ENCODE measurements at regions of chr19 and their contacts with region 1.

Region 1: GRCh38 chr19:44212250-44212865 is at the start of gene ZNF227:
- DNase-seq: peak; percentile 85
- ATAC-seq: peak; percentile 94
- H3K4me3 ChIP-seq: peak within 1 kb of the TSS; percentile 85 to 93 (median 88)
- H3K4me3 Mint-ChIP-seq: peak within 1 kb of the TSS; percentile 96
- H3K27ac ChIP-seq: peak within 1 kb of the TSS; percentile 48 to 77
- H3K27ac Mint-ChIP-seq: peak within 1 kb of the TSS; percentile 93
- H3K4me1 ChIP-seq: peaks cover 14 to 15% of the 10 kb centered on the region in 2 donors
- H3K4me1 Mint-ChIP-seq: peaks cover 21% of the 10 kb centered on the region
- H3K27me3 ChIP-seq: no peaks in the 10 kb centered on the region
- H3K27me3 Mint-ChIP-seq: no peaks in the 10 kb centered on the region
- CTCF ChIP-seq: no peak
- total RNA-seq, gene ZNF227: 49.5 and 53.0 TPM in 2 replicates

Region 2: DNA sequence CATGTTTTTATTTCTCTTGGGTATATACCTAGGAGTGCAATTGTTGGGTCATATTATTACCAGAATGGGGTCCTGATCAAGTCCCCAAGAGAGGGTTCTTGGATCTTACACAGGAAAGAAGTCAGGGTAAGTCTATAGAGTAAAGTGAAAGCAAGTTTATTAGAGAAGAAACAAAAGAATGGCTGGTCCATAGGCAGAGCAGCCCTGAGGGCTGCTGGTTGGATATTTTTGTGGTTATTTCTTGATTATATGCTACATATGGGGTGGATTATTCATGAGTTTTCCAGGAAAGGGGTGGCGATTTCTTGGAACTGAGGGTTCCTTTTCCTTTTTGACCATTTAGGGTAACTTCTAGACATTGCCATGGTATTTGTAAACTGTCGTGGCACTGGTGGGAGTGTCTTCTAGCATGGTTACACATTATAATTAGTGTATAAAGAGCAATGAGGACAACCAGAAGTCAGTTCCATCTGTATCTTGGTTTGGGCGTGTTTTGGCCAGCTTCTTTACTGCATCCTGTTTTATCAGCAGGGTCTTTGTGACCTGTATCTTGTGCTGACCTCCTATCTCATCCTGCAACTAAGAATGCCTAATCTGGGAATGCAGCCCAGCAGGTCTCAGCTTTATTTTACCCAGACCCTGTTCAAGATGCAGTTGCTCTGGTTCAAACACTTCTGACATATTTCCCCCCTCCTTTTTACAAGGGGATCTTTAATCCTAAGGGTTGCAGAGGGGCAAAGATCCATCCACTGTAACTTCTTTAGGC is 1725.1 kb before region 1 on chr19:
- CTCF ChIA-PET with region 1: no interaction called
- POLR2A ChIA-PET with region 1: interaction called, 12 read pairs
- intact Hi-C with region 1: no loop called
- DNase-seq: no peak
- ATAC-seq: no peak
- H3K4me3 ChIP-seq: no peak overlapping the region
- H3K4me3 Mint-ChIP-seq: no peak overlapping the region
- H3K27ac ChIP-seq: no peak overlapping the region
- H3K27ac Mint-ChIP-seq: no peak overlapping the region
- H3K4me1 ChIP-seq: no peaks in the 10 kb centered on the region
- H3K4me1 Mint-ChIP-seq: no peaks in the 10 kb centered on the region
- H3K27me3 ChIP-seq: no peaks in the 10 kb centered on the region
- H3K27me3 Mint-ChIP-seq: no peaks in the 10 kb centered on the region
- CTCF ChIP-seq: no peak

Region 3: DNA sequence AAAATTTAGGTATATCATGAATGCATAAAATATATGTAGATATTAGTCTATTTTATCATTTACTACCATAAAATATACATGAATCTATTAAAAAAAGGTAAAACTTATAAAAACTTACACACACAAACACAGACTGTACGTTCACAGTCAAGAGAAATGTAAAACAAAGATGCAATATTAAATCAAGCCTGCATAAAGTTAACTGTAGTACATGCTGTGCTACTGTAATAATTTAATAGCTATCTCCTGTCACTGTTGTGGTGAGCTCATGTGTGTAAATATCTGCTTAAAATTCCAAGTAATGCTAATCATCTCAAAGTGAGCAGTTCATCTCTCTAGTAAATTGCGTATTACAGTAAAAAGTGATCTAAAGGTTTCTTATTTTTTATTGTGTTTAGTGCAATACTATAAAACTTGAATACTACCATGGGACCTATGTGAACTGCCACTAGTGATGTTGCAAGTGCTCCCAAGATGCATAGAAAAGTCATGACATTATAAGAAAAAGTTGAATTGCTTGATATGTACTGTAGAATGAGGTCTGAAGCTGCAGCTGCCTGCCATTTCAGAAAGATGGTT is 46.6 kb after region 1 on chr19:
- CTCF ChIA-PET with region 1: interaction called, 4 read pairs
- POLR2A ChIA-PET with region 1: no interaction called
- intact Hi-C with region 1: loop called (anchors 1 kb)
- DNase-seq: no peak
- ATAC-seq: no peak
- H3K4me3 ChIP-seq: no peak overlapping the region
- H3K4me3 Mint-ChIP-seq: peak overlapping the region; percentile 55
- H3K27ac ChIP-seq: no peak overlapping the region
- H3K27ac Mint-ChIP-seq: no peak overlapping the region
- H3K4me1 ChIP-seq: peaks cover 5 to 13% of the 10 kb centered on the region in 2 donors
- H3K4me1 Mint-ChIP-seq: peaks cover 12% of the 10 kb centered on the region
- H3K27me3 ChIP-seq: no peaks in the 10 kb centered on the region
- H3K27me3 Mint-ChIP-seq: no peaks in the 10 kb centered on the region
- CTCF ChIP-seq: no peak

Region 4: DNA sequence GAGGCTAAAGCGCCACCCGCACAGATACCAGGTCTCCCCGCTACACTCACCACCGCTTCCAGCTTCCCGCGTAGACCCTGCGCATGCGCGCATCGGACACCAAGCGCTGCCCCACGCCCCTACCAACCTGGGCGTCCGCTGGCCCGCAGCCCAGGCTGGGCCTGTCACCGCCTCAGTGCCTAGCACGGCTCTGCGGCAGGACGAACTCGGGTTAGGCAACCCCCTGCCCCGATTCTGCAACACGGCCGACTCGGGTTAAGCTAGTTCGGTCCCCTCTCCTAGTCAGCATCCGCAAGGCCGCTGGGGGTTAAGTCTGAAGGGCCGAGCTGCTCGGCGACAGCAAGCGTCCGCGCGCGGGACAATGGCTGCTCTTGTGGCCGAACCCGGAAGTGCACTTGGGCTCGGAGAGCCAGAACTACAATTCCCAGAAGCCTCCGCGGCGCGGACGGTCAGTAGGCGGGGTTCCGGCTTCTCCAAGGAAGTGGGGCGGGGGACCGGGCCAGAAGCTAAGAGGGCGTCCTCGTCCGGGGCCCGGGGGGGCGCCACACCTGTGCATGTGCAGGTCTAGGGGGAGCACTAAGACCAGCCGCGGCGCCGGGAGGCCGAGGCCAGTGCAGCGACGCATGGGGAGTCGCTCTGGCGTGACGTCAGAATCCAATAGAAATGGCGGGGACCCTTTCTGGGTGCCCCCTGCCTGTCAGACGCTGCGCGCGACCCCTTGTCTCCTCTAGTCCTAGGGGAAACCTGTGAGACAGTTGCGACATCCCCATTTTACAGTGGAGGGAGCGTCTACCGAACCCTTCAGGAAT is 288.0 kb after region 1 on chr19 and contains the start of gene ZNF180:
- CTCF ChIA-PET with region 1: no interaction called
- POLR2A ChIA-PET with region 1: no interaction called
- intact Hi-C with region 1: loop called (anchors 1 kb)
- DNase-seq: peak; percentile 98
- ATAC-seq: peak; percentile 93
- H3K4me3 ChIP-seq: peak within 1 kb of the TSS; percentile 70 to 99 (median 93)
- H3K4me3 Mint-ChIP-seq: peak within 1 kb of the TSS; percentile 99
- H3K27ac ChIP-seq: peak within 1 kb of the TSS; percentile 52 to 84
- H3K27ac Mint-ChIP-seq: peak within 1 kb of the TSS; percentile 92
- H3K4me1 ChIP-seq: peaks cover 13 to 25% of the 10 kb centered on the region in 2 donors
- H3K4me1 Mint-ChIP-seq: peaks cover 29% of the 10 kb centered on the region
- H3K27me3 ChIP-seq: peaks cover 0 to 5% (median 2%) of the 10 kb centered on the region in 4 experiments
- H3K27me3 Mint-ChIP-seq: peaks cover 14% of the 10 kb centered on the region
- CTCF ChIP-seq: peak; percentile 56
- total RNA-seq, gene ZNF180: 16.1 and 19.6 TPM in 2 replicates